ENCODE measurements at regions of chr5 and their contacts with region 1.

Region 1: DNA sequence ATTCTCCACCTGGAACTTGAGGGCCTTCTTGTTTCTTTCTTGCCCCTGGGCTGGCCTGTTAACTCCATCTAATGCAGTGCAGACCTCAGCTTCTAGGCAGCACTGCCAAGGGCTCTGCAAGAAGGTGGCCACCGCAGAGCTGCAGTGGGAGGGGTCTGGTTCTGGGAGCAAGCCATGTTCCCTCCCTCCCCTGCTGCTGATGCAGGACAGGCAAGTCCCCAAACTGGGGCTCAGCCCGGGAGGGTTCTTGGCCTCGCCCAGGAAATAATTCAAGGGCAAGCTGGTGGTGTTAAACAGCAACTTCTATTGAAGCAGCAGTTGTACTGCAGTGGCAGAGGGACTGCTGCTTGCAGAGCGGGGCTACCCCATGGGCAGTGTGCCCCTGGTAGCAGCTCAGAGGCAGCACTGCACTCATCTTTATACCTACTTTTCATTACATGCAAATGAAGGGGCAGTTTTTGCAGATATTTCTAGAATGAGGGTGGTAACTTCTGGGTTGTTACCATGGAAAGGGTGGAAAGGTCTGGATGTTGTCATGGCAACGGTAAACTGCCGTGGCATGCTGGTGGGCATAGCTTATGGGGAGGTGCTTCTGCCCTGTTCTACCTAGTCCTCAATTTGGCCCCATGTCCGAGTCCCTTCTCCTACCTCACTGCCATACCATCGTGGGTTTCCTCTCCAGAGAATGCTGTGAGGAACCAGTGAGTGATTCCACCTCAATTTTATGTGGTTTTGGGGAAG is 82.1 kb downstream of the WDR41 start:
- DNase-seq: no peak
- ATAC-seq: no peak
- H3K4me3 ChIP-seq: no peak overlapping the region
- H3K27ac ChIP-seq: no peak overlapping the region
- H3K4me1 ChIP-seq: peaks cover 0 to 5% of the 10 kb centered on the region in 2 donors
- H3K27me3 ChIP-seq: no peaks in the 10 kb centered on the region

Region 2: GRCh38 chr5:77145666-77146065 is 264.4 kb before region 1 on chr5:
- intact Hi-C with region 1: no loop called
- DNase-seq: no peak
- ATAC-seq: peak; percentile 58
- H3K4me3 ChIP-seq: no peak overlapping the region
- H3K27ac ChIP-seq: no peak overlapping the region
- H3K4me1 ChIP-seq: no peaks in the 10 kb centered on the region
- H3K27me3 ChIP-seq: no peaks in the 10 kb centered on the region

Region 3: GRCh38 chr5:77204967-77205366 is 205.1 kb before region 1 on chr5:
- intact Hi-C with region 1: no loop called
- DNase-seq: no peak
- ATAC-seq: no peak
- H3K4me3 ChIP-seq: no peak overlapping the region
- H3K27ac ChIP-seq: no peak overlapping the region
- H3K4me1 ChIP-seq: peaks cover 0 to 3% of the 10 kb centered on the region in 2 donors
- H3K27me3 ChIP-seq: no peaks in the 10 kb centered on the region

Region 4: DNA sequence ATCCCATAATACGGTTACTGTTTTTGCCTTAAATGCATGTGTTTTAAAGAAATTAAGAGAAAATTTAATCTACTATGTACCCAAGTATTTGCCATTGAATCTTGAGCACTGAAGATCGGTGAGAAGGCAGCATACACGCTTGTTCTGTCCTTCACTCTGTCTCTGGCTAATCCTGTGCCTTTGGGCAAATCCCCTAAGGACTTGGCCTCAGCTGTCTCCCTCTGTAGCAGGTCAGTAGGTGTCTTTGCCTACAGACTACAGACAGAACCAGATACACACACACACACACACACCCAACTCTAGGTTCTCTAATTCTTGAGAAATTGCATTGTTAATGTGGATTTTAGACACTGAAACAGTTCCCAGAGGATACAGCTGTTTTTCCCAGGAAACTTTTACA is 35.4 kb before region 1 on chr5:
- intact Hi-C with region 1: loop called in 1 of 2 experiments (anchors 5 kb)
- DNase-seq: no peak
- ATAC-seq: no peak
- H3K4me3 ChIP-seq: no peak overlapping the region
- H3K27ac ChIP-seq: peak overlapping the region in 1 of 2 donors; percentile 6
- H3K4me1 ChIP-seq: peaks cover 0 to 3% of the 10 kb centered on the region in 2 donors
- H3K27me3 ChIP-seq: no peaks in the 10 kb centered on the region